Activated naive CD4-positive, alpha-beta T cell treated with anti-CD3 and anti-CD28 coated beads for 36 hours (primary cell): ENCODE measurements at regions of chr16 and their contacts with region 1.

Region 1: GRCh38 chr16:19521471-19522396 is at the start of gene GDE1:
- DNase-seq: peak; percentile 96
- H3K4me3 Mint-ChIP-seq: peak within 1 kb of the TSS; percentile 84
- H3K27ac Mint-ChIP-seq: peak within 1 kb of the TSS; percentile 52
- H3K4me1 Mint-ChIP-seq: peaks cover 45% of the 10 kb centered on the region
- H3K27me3 Mint-ChIP-seq: no peaks in the 10 kb centered on the region
- total RNA-seq, gene GDE1: 13.3 to 17.1 TPM

Region 2: DNA sequence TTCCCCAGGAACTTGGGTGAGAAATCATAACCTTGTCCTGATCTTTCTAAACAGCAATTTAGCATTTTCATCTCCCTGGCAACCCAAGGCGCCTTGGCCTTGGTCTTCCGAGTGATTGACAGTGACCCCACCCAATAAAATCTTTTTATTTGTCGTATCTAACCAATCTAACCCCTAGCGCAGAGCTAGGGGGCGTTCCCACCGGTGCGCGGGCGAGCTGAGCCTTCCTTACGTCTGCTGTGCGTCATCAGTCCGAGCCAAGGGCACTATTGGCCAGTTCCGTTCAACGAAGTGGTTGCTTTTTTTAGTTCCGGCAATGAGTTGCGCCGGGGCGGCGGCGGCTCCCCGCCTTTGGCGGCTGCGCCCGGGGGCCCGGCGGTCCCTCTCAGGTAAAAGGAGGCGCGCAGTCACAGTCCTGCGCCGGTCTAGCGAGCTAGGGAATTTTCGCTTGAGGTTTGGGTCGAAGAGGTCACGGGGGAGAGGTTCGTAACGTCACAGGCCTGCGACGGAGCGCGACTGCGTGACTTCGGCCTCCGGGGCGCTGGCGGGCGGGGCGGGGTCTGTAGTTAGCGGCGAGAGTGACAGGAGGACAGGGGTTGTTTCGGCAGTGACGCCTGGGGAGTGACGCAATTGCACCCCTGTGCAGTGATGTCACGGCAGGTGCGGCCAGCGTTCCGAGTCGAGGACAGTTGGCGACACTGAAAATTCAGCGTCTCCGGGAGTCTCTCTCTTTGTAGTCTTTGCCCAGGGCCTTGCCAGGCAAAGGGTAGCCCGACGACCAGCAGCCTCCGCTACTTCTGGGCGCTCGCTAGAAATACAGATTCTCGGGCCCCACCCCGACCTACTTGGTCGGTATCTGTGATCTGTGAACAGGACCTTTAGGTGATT is 454.1 kb before region 1 on chr16 and contains the start of gene COQ7:
- CTCF ChIA-PET with region 1: no interaction called
- intact Hi-C with region 1: loop called (anchors 1 kb)
- DNase-seq: peak; percentile 99
- H3K4me3 Mint-ChIP-seq: peak within 1 kb of the TSS; percentile 89
- H3K27ac Mint-ChIP-seq: peak within 1 kb of the TSS; percentile 92
- H3K4me1 Mint-ChIP-seq: peaks cover 8% of the 10 kb centered on the region
- H3K27me3 Mint-ChIP-seq: no peaks in the 10 kb centered on the region
- total RNA-seq, gene COQ7: 16.4 to 21.3 TPM

Region 3: DNA sequence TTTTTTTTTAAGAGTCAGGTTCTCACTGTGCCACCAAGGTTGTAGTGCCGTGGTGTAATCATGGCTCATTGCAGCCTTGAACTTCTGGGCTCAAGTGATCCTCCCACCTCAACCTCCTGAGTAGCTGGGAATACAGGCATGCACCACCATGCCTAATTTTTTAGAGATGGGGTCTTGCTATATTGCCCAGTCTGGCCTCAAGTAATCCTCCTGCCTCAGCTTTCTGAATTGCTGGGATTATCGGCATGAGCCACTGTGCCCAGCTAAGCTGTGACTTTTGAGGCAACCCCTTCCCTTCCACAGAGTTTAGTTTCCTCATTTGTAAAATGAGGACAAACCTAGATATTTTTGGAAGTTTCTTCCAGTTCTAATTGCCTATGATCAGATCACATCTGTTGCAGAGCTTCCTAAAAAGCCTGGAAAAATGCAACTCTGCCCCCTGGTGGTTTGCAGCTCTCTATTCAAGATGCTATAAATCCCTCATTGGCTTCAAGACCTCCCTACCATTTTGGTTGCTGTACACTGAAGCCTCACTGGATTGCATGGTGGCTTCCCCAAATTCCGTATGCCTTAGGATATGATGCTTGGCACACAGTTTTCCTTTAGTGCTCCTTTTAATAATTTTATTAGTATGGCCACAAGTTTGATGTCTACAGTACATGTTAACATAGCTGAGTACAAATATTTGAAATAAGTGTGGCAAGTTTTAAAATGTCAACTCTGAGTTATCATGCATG is 19.2 kb before region 1 on chr16:
- CTCF ChIA-PET with region 1: interaction called, 14 read pairs
- intact Hi-C with region 1: no loop called
- DNase-seq: peak; percentile 83
- H3K4me3 Mint-ChIP-seq: no peak overlapping the region
- H3K27ac Mint-ChIP-seq: no peak overlapping the region
- H3K4me1 Mint-ChIP-seq: no peaks in the 10 kb centered on the region
- H3K27me3 Mint-ChIP-seq: no peaks in the 10 kb centered on the region

Region 4: DNA sequence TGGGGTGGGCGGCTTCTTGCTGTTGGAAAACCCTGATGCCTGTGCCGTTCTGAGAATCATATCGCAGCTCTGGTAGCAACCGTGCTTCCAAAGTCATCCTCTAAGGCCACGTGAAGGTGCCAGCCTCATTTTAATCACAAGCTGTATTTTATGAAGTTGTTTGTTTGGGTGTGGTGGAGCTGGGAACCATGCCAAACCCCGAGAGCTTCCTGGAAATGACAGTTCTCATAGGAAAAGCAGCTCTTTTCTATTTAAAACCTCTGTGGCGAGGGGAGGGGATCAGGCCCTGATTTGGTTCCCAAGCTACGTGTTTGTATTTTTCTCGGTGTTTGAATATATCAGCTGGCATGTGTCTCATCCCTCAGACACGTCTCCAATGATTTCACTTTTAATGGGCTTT is 174.6 kb after region 1 on chr16:
- CTCF ChIA-PET with region 1: no interaction called
- intact Hi-C with region 1: loop called (anchors 5 kb)
- DNase-seq: peak; percentile 77
- H3K4me3 Mint-ChIP-seq: no peak overlapping the region
- H3K27ac Mint-ChIP-seq: peak overlapping the region; percentile 69
- H3K4me1 Mint-ChIP-seq: peaks cover 66% of the 10 kb centered on the region
- H3K27me3 Mint-ChIP-seq: no peaks in the 10 kb centered on the region

Region 5: DNA sequence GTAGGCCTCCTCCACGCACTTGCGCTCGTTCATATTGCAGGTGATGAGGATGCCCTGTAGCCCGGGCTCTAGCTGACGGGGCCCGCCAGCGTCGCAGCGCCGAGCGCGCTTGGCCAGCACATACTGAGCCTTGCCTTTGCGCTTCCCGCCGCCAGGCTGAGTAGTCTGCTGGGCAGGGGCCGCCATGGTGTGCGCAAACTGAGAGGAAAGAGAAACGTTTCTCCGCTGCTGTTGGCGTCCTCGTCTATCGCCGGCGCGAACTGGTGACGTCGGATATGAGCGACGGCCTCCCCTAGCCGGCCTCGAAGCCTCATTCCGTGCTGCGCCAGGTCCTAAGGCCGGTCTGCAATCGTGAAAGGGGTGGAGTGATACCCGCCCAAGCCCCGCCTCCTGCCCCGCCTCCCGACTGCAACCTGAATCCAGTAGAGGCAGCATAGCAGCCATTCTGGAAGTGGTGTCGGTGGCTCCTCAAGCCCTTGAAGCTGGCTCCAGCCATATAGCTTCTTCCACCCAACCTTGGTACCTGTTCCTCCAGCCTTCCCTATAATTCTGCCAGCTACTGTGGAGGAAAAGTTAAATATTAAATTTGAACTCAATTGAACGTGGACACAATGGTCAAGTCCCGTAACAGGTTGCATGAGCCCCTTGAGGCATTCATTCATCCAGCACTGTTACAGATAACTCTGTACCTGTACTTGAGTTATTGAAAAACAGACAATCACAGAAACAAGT is 1220.0 kb after region 1 on chr16 and contains the start of gene THUMPD1:
- CTCF ChIA-PET with region 1: no interaction called
- intact Hi-C with region 1: loop called (anchors 2 kb)
- DNase-seq: peak; percentile 100
- H3K4me3 Mint-ChIP-seq: peak within 1 kb of the TSS; percentile 94
- H3K27ac Mint-ChIP-seq: peak within 1 kb of the TSS; percentile 95
- H3K4me1 Mint-ChIP-seq: peaks cover 29% of the 10 kb centered on the region
- H3K27me3 Mint-ChIP-seq: no peaks in the 10 kb centered on the region
- total RNA-seq, gene THUMPD1: 47.5 to 49.8 TPM